ENCODE measurements at regions of chr15 and their contacts with region 1.

Region 1: DNA sequence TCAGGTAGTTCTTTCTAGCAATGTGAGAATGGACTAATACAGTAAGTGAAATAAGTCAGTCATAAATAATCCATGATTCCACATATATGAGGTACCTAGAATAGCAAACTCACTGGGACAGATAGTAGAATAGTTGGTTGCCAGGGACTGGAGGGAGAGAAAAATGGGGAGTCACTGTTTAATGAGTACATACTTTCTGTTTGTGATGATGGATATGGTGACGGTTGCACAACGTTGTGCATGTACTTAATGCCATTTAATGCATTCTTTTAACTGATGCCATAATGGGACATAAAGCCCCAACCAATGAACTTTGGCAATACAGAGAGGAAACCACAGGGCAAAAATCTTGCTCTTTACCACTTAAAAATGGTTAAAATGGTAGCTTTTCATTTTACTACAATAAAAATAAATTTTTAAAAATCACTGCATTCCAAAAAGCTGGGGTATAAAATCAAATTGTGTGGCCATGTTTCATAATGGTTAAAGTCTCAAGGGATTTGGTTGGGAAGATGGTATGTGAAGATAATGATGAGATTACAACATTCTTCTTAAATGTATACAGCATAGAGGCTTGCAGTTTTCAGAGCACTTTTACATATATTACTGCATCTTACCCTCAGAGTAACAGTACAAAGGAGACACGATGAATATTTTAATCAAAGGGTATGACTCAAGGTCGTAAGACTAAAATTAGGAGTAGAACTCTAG is 45.2 kb downstream of the ADAM10 start:
- DNase-seq: no peak
- H3K4me3 ChIP-seq: no peak overlapping the region
- H3K27ac ChIP-seq: no peak overlapping the region
- H3K4me1 ChIP-seq: no peaks in the 10 kb centered on the region
- H3K27me3 ChIP-seq: no peaks in the 10 kb centered on the region
- CTCF ChIP-seq: no peak

Region 2: DNA sequence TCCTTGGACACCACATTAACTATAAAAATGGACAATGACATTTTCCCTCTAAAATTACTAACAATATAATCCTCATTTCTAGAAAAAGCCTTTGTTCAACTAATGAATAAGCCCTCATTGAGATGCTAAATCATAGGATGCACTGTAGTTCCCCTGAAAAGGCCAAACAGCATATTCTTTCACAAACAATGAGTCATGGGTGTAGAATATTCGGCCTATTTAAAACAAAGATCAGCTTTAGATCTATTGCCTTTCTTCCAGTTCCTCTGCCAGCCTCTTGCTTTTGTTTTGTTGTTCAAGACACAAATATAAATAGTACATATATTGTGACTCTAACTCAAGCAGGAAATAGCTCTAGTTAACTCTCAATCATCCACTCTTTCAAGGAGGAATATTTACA is 37.4 kb before region 1 on chr15:
- CTCF ChIA-PET with region 1: no interaction called
- POLR2A ChIA-PET with region 1: no interaction called
- intact Hi-C with region 1: loop called (anchors 5 kb)
- DNase-seq: peak in 1 of 2 experiments; percentile 37
- H3K4me3 ChIP-seq: no peak overlapping the region
- H3K27ac ChIP-seq: peak overlapping the region; percentile 37; the same call in 1 of the 2 replicates
- H3K4me1 ChIP-seq: peaks cover 21% of the 10 kb centered on the region
- H3K27me3 ChIP-seq: no peaks in the 10 kb centered on the region
- CTCF ChIP-seq: no peak

Measured in PC-9 (cell line).